ENCODE measurements at regions of chr14 and their contacts with region 1.

Region 1: DNA sequence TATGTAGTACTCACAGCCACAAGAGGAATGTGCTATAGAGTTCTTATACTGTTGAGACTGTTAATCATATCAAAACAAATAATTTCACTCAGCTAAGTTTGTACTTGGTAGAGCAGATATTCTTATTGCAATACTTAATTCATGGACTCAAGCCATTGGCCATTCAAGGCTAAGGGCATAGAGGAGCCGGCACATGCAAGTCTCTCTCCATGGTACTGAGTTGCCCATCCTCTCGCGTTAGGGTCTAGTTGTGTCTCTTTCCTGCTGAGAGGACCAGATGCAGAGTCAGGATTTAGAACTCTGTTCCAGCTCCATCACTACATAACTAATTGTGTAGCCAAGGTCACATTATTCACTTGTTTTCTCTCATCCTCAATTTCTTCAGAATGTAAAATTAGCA is 14.4 kb upstream of the TUNAR start:
- DNase-seq: no peak
- ATAC-seq: no peak
- H3K4me3 ChIP-seq: no peak overlapping the region
- H3K27ac ChIP-seq: no peak overlapping the region
- H3K4me1 ChIP-seq: no peaks in the 10 kb centered on the region
- H3K27me3 ChIP-seq: peaks cover 1% of the 10 kb centered on the region; the same call in 1 of the 2 replicates
- CTCF ChIP-seq: no peak

Region 2: GRCh38 chr14:97506626-97507025 is 1644.4 kb after region 1 on chr14:
- CTCF ChIA-PET with region 1: no interaction called
- POLR2A ChIA-PET with region 1: interaction called, 11 read pairs
- in situ Hi-C with region 1: no loop called
- intact Hi-C with region 1: no loop called
- DNase-seq: no peak
- ATAC-seq: no peak
- H3K4me3 ChIP-seq: no peak overlapping the region
- H3K27ac ChIP-seq: no peak overlapping the region
- H3K4me1 ChIP-seq: no peaks in the 10 kb centered on the region
- H3K27me3 ChIP-seq: no peaks in the 10 kb centered on the region
- CTCF ChIP-seq: no peak